ENCODE measurements at regions of chr7 and their contacts with region 1.

Region 1: DNA sequence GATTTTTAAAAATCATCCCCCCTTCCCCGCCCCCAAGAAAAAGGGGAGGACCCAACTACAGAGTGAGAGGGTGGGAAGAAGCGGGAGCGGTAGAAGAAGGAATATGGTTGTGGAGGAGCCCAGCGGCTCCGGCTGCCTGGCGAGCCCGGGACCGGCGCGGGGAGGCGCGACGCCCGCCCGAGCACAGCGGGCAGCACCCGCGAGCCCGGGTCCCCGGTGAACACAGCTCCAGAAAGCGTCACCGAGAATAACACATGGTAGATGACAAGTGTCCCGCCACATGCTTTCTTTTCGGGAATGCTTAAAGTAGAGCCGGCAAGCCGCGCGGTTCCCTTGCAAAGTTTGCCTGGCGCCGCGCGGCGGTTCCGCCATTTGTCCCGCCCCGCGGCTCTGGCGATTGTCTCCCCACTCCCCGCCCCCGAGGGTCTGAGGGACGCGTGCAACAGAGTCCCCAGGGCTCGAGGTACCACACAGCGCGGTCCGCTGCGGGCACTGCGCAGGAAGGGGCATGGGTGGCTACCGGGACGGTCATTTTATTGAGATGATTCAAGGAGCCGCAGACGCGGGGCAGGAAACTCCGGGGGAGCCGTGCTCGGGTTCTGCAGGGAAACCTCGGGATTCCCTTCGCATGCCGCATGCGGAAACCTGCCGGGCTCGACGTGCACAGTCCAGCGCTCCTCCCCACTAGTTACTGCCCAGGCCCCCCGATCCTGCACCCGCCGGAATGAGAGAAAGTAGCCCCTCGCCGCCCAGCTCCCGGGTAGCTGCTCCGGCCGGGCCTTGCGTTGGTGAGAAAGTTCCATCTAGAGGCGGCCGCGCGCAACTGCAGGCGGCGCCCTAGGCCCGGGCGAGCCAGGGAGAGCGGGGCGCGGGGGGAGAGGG is 781 bp upstream of the GRM8 start:
- DNase-seq: peak; percentile 74
- ATAC-seq: peak; percentile 82
- H3K4me3 Mint-ChIP-seq: peak overlapping the region; percentile 76
- H3K27ac Mint-ChIP-seq: no peak overlapping the region
- H3K4me1 Mint-ChIP-seq: peaks cover 14% of the 10 kb centered on the region
- H3K27me3 Mint-ChIP-seq: peaks cover 67% of the 10 kb centered on the region
- CTCF ChIP-seq: peak; percentile 91

Region 2: GRCh38 chr7:127239814-127240213 is 13.7 kb before region 1 on chr7:
- CTCF ChIA-PET with region 1: interaction called, 12 read pairs
- POLR2A ChIA-PET with region 1: no interaction called
- intact Hi-C with region 1: no loop called
- DNase-seq: peak; percentile 44
- ATAC-seq: no peak
- H3K4me3 Mint-ChIP-seq: no peak overlapping the region
- H3K27ac Mint-ChIP-seq: no peak overlapping the region
- H3K4me1 Mint-ChIP-seq: no peaks in the 10 kb centered on the region
- H3K27me3 Mint-ChIP-seq: peaks cover 31% of the 10 kb centered on the region
- CTCF ChIP-seq: peak; percentile 47

Region 3: GRCh38 chr7:127270093-127270492 is 16.6 kb after region 1 on chr7:
- CTCF ChIA-PET with region 1: interaction called, 11 read pairs
- POLR2A ChIA-PET with region 1: no interaction called
- intact Hi-C with region 1: no loop called
- DNase-seq: no peak
- ATAC-seq: no peak
- H3K4me3 Mint-ChIP-seq: no peak overlapping the region
- H3K27ac Mint-ChIP-seq: no peak overlapping the region
- H3K4me1 Mint-ChIP-seq: no peaks in the 10 kb centered on the region
- H3K27me3 Mint-ChIP-seq: peaks cover 13% of the 10 kb centered on the region
- CTCF ChIP-seq: no peak

Measured in activated CD8-positive, alpha-beta T cell treated with anti-CD3 and anti-CD28 coated beads for 36 hours (primary cell).